ENCODE measurements at regions of chr1 and their contacts with region 1.

Region 1: GRCh38 chr1:32881871-32882850 is 4.1 kb upstream of the HPCA start:
- DNase-seq: no peak
- H3K4me3 ChIP-seq: peak overlapping the region in 1 of 2 donors; percentile 52
- H3K27ac ChIP-seq: peak overlapping the region in 1 of 2 donors; percentile 23
- H3K4me1 ChIP-seq: peaks cover 10 to 13% of the 10 kb centered on the region in 2 donors
- H3K27me3 ChIP-seq: no peaks in the 10 kb centered on the region
- CTCF ChIP-seq: no peak

Region 2: GRCh38 chr1:32848354-32849063 is 33.7 kb before region 1 on chr1:
- intact Hi-C with region 1: no loop called
- DNase-seq: no peak
- H3K4me3 ChIP-seq: no peak overlapping the region
- H3K27ac ChIP-seq: no peak overlapping the region
- H3K4me1 ChIP-seq: no peaks in the 10 kb centered on the region
- H3K27me3 ChIP-seq: no peaks in the 10 kb centered on the region
- CTCF ChIP-seq: no peak

Region 3: GRCh38 chr1:33080885-33081553 is 198.9 kb after region 1 on chr1 and contains the start of gene AZIN2:
- intact Hi-C with region 1: loop called (anchors 5 kb)
- DNase-seq: peak; percentile 84 to 98
- H3K4me3 ChIP-seq: peak within 1 kb of the TSS; percentile 70 to 91
- H3K27ac ChIP-seq: peak within 1 kb of the TSS in 1 of 2 donors; percentile 11
- H3K4me1 ChIP-seq: peaks cover 0 to 14% of the 10 kb centered on the region in 2 donors
- H3K27me3 ChIP-seq: no peaks in the 10 kb centered on the region
- CTCF ChIP-seq: no peak
- total RNA-seq, gene AZIN2: 3.5 TPM